Heart left ventricle (tissue), 16 donors: ENCODE measurements at regions of chr18 and their contacts with region 1.

Region 1: DNA sequence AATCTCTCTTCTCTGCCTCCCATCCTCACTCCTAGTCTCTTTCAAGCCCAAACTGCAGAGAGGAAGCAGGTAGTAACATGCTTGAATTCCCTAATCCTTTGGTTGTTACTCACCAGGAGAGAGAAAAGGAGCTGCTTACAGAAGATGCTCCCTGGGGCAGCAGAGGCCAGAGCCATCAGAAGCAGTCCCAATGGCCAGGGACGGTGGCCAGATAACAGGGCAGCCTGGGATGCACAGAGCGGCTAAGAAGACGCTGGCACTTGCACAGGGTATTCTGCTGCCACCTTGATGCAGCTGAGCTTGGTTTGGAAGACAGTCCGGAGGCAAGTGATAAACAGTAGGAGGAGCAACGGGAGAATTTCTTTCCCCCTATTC is 250 bp downstream of the DSC1 start:
- DNase-seq: no peak
- ATAC-seq: peak in 3 of 4 donors; percentile 38 to 44 (median 42)
- H3K4me3 ChIP-seq: no peak overlapping the region
- H3K27ac ChIP-seq: peak overlapping the region in 3 of 12 donors; percentile 17 to 35 (median 24)
- H3K4me1 ChIP-seq: peaks cover 0 to 5% (median 0%) of the 10 kb centered on the region in 12 donors
- H3K27me3 ChIP-seq: no peaks in the 10 kb centered on the region
- CTCF ChIP-seq: no peak
- POLR2A ChIP-seq: no peak

Region 2: DNA sequence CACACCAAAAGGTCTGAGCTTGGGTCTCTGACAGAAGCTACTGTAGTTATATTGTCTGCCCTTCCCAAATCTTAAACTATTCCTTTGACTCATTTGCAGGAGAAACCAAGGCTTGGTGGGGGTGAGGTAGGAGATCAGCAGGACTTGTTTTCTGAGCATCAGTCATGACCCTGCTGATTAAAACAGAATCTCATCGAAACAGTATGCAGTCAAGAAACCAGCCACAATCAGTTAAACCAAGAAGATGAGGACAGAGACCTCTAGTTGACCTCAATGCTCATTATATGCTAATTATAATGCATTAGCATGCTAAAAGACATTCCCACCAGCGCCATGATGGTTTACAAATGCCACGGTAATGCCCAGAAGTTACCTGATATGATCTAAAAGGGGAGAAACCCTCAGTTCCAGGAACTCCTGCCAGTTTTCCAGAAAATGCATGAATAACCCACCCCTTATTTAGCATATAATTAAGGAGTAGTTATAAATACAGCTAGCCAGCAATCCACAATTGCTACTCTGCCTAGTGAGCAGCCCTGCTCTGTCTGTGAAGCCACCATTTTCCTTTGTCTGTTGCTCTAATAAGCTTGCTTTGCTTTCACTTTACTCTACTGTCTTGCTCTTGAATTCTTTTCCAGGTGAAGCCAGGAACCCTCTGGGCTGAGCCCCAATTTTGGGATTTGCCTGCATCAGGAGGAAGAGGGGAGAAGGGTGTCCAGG is 146.5 kb before region 1 on chr18:
- intact Hi-C with region 1: no loop called
- DNase-seq: no peak
- ATAC-seq: no peak
- H3K4me3 ChIP-seq: no peak overlapping the region
- H3K27ac ChIP-seq: no peak overlapping the region
- H3K4me1 ChIP-seq: no peaks in the 10 kb centered on the region
- H3K27me3 ChIP-seq: peaks cover 0 to 3% (median 0%) of the 10 kb centered on the region in 9 donors
- CTCF ChIP-seq: no peak
- POLR2A ChIP-seq: no peak

Region 3: GRCh38 chr18:31112804-31113203 is 49.6 kb before region 1 on chr18:
- intact Hi-C with region 1: loop called in 1 of 10 experiments (anchors 5 kb)
- DNase-seq: no peak
- ATAC-seq: no peak
- H3K4me3 ChIP-seq: no peak overlapping the region
- H3K27ac ChIP-seq: no peak overlapping the region
- H3K4me1 ChIP-seq: no peaks in the 10 kb centered on the region
- H3K27me3 ChIP-seq: no peaks in the 10 kb centered on the region
- CTCF ChIP-seq: no peak
- POLR2A ChIP-seq: no peak

Region 4: DNA sequence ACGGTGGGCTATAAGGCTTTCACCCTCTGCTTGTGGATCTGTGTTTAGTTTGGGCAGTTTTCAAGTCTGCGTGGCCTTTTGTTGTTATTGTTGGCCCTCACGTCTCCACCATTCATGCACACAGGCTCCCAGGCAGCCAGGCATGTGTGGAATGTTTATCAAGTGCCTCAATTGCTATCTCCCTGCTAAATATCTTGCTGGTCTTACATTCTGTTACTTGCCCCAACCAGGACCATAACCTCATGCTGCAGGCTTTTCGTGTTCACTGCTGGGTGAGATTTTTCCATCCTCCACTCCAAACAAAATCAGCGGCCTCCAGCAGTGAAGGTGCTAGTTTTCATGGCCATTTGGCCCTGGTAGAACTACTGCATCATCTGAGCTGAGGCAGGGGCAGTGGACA is 63.3 kb after region 1 on chr18:
- intact Hi-C with region 1: loop called in 1 of 10 experiments (anchors 10 kb)
- DNase-seq: peak in 4 of 5 donors; percentile 55 to 84 (median 60)
- ATAC-seq: peak; percentile 90 to 96 (median 94)
- H3K4me3 ChIP-seq: peak overlapping the region in 1 of 12 donors; percentile 4
- H3K27ac ChIP-seq: peak overlapping the region; percentile 69 to 98 (median 84)
- H3K4me1 ChIP-seq: peaks cover 0 to 21% (median 3%) of the 10 kb centered on the region in 12 donors
- H3K27me3 ChIP-seq: no peaks in the 10 kb centered on the region
- CTCF ChIP-seq: no peak
- POLR2A ChIP-seq: no peak

Region 5: GRCh38 chr18:31261792-31262582 is 99.6 kb after region 1 on chr18:
- intact Hi-C with region 1: no loop called
- DNase-seq: no peak
- ATAC-seq: peak in 2 of 4 donors; percentile 61 to 71
- H3K4me3 ChIP-seq: no peak overlapping the region
- H3K27ac ChIP-seq: peak overlapping the region in 2 of 12 donors; percentile 8 to 12
- H3K4me1 ChIP-seq: peaks cover 0 to 7% (median 0%) of the 10 kb centered on the region in 12 donors
- H3K27me3 ChIP-seq: no peaks in the 10 kb centered on the region
- CTCF ChIP-seq: no peak
- POLR2A ChIP-seq: no peak